ENCODE measurements at regions of chr17 and their contacts with region 1.

Region 1: GRCh38 chr17:61862975-61863800 is at the start of gene BRIP1:
- DNase-seq: peak; percentile 85
- ATAC-seq: peak; percentile 96
- H3K4me3 Mint-ChIP-seq: peak within 1 kb of the TSS; percentile 96
- H3K27ac Mint-ChIP-seq: peak within 1 kb of the TSS; percentile 95
- H3K4me1 Mint-ChIP-seq: peaks cover 26% of the 10 kb centered on the region
- H3K27me3 Mint-ChIP-seq: no peaks in the 10 kb centered on the region
- total RNA-seq, gene BRIP1: 20.1 TPM

Region 2: DNA sequence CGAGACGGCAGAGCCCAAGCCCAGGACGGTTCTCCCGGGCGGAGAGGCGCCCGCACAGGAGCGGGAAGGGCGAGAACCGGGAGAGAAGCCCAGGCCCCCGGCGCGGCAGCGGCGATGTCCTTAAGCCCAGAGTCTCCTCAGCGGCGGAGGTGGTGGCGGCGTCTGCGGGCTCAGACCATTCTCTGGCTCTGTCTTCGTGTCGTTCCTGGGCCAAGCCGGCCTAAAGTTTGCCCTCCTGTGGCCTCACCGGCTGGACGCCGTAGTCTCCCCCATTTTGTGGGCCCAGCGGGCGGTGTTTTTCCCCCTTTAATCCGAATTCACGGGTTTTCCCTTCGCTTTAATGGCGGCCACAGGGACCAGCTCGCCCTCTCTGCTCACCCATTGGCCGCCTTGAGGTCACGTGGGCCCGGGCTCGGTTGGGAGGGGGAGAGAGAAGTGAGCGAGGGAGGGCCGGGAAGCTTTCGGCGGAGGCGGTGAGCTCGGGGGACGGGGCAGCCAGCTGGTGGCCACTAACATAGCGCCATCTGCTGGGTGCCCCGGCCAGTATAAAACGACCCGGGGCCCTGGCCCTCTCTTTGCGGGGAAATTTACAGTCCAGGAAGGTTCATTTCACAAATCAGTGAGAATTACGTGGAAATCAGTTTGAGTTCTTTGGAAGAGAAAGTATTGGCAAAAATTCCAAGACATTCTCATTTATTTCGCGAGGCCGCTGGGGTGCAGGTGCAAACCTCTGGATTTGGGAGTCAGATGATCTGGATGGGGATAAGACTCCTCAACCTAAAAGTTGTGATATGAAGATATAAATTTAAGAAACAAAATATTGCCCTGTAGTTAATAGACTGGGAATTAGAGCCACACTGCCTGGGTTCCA is 202.6 kb after region 1 on chr17:
- POLR2A ChIA-PET with region 1: interaction called, 29 read pairs
- DNase-seq: peak; percentile 96
- ATAC-seq: peak; percentile 94
- H3K4me3 Mint-ChIP-seq: peak overlapping the region; percentile 97
- H3K27ac Mint-ChIP-seq: peak overlapping the region; percentile 99
- H3K4me1 Mint-ChIP-seq: peaks cover 25% of the 10 kb centered on the region
- H3K27me3 Mint-ChIP-seq: no peaks in the 10 kb centered on the region